ENCODE measurements at regions of chr5 and their contacts with region 1.

Region 1: GRCh38 chr5:151523335-151523734 is 67.8 kb downstream of the FAT2 start:
- DNase-seq: no peak
- H3K4me3 ChIP-seq: no peak overlapping the region
- H3K27ac ChIP-seq: no peak overlapping the region
- H3K4me1 ChIP-seq: no peaks in the 10 kb centered on the region
- H3K27me3 ChIP-seq: no peaks in the 10 kb centered on the region
- CTCF ChIP-seq: peak; percentile 44

Region 2: DNA sequence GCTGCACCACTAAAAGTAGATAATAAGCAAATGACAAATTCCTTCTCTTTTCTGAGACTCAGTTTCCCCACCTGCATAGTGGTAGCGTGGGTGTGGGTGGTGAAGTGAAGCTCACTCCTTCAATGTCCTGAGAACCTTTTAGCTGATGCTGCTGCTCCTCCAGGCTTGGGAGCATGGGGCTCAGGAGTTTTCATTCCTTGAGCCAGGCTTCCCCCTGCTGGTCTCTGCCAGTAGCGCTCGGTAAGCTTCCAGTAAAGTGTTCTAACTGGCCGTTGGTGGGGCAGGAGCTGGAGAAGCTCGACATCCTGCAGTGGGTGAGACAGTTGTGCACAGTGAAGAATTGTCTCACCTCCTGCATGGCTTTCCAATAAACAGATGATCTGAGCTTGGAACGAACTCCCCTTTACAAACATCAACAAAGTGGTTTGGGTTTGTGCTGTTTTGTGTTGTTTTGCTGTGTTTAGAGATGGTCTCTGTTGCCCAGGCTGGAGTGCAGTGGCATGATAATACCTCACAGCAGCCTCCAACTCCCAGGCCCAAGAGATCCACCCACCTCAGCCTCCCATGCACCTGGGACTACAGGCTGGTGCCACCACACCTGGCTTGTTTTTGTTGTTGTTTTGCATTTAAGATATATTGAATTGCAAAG is 128.8 kb after region 1 on chr5:
- intact Hi-C with region 1: loop called (anchors 5 kb)
- DNase-seq: peak; percentile 79
- H3K4me3 ChIP-seq: no peak overlapping the region
- H3K27ac ChIP-seq: no peak overlapping the region
- H3K4me1 ChIP-seq: no peaks in the 10 kb centered on the region
- H3K27me3 ChIP-seq: no peaks in the 10 kb centered on the region
- CTCF ChIP-seq: peak; percentile 90